Common myeloid progenitor, CD34-positive (primary cell): ENCODE measurements at regions of chr19 and their contacts with region 1.

Region 1: DNA sequence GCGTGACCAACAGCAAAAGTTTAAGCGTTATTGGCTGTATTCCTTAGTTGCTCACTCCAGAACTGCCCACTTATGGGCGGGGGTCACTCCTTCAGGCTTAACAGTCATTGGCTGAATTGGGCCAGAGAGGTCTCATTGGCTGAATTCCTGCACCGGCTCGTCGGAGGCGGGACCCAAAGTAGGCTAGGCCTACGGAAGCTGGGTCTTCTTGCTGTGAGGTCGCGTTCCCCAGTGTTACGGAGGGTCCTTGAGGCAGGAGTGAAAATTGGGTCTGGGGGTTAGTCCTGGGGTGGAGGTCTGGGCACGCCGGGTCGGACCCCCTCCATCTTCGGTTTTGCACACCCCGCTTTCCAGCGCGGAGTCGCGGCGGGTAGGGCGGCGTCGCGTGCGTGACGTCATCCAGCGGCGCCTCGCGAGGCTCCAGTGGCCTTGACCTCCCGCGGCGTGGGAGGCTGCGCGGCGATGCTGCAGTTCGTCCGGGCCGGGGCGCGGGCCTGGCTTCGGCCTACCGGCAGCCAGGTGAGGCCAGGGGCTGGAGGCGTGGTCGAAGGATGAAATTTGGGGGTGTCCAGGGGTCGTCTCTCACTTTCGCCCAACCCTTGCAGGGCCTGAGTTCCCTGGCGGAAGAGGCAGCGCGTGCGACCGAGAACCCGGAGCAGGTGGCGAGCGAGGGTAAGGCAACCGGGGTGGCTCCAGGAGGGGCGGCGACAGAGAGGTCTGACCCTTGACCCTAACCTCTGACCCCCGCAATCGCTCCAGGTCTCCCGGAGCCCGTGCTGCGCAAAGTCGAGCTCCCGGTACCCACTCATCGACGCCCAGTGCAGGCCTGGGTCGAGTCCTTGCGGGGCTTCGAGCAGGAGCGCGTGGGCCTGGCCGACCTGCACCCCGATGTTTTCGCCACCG is at the start of gene MRPL4:
- DNase-seq: peak; percentile 99
- H3K4me3 ChIP-seq: peak within 1 kb of the TSS; percentile 74 to 95 (median 88)
- H3K27ac ChIP-seq: peak within 1 kb of the TSS; percentile 50 to 79
- H3K4me1 ChIP-seq: peaks cover 5 to 19% (median 15%) of the 10 kb centered on the region in 4 experiments
- H3K27me3 ChIP-seq: no peaks in the 10 kb centered on the region

Region 2: GRCh38 chr19:9932835-9933234 is 319.2 kb before region 1 on chr19:
- CTCF ChIA-PET with region 1: interaction called, 12 read pairs
- POLR2A ChIA-PET with region 1: no interaction called
- DNase-seq: no peak
- H3K4me3 ChIP-seq: no peak overlapping the region
- H3K27ac ChIP-seq: no peak overlapping the region
- H3K4me1 ChIP-seq: peaks cover 0 to 16% (median 9%) of the 10 kb centered on the region in 4 experiments
- H3K27me3 ChIP-seq: peaks cover 6 to 50% (median 22%) of the 10 kb centered on the region in 5 experiments

Region 3: DNA sequence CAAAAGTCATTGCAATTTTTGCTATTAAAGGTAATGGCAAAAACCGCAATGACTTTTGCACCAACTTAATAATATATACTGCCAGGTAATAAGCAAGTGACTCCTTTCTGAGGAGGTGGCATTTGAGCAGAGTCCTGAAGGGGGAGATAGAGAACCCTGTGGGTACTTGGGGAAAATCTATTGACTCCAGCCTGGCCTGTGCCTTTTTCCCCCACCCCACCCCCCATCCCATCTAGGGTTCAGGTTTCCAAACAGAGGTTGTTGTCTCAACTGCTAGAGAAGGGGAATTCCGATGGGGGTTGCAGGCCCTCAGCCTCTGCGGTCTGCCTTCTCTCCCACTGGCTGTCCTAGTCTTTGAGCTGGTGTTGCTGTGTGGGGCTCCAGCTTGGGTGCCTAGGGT is 32.4 kb before region 1 on chr19:
- CTCF ChIA-PET with region 1: interaction called, 36 read pairs
- POLR2A ChIA-PET with region 1: no interaction called
- DNase-seq: peak; percentile 53 to 88 (median 86)
- H3K4me3 ChIP-seq: no peak overlapping the region
- H3K27ac ChIP-seq: no peak overlapping the region
- H3K4me1 ChIP-seq: peaks cover 6 to 23% (median 20%) of the 10 kb centered on the region in 4 experiments
- H3K27me3 ChIP-seq: no peaks in the 10 kb centered on the region

Region 4: DNA sequence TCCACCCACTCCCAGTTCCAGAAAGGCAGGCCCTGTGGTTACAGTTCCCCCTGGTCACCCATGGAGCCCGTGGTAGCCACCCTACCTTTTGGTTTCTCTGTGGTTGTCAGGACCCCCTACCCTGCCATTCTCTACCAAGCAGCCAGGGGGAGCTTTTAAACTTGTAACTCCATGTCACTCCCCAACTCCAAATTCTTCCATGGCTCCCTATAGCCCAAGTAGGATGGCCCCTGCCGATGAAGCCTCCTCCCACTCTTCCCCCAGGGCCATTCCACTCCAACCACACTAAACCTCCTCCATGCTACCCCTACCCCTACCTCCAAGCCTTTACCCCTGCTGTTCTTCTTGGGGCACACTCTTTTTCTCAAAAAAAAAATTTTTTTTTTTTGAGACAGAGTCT is 23.1 kb before region 1 on chr19:
- CTCF ChIA-PET with region 1: interaction called, 18 read pairs
- POLR2A ChIA-PET with region 1: interaction called, 4 read pairs
- DNase-seq: peak; percentile 42 to 69 (median 68)
- H3K4me3 ChIP-seq: no peak overlapping the region
- H3K27ac ChIP-seq: no peak overlapping the region
- H3K4me1 ChIP-seq: peaks cover 0 to 29% (median 21%) of the 10 kb centered on the region in 4 experiments
- H3K27me3 ChIP-seq: no peaks in the 10 kb centered on the region

Region 5: DNA sequence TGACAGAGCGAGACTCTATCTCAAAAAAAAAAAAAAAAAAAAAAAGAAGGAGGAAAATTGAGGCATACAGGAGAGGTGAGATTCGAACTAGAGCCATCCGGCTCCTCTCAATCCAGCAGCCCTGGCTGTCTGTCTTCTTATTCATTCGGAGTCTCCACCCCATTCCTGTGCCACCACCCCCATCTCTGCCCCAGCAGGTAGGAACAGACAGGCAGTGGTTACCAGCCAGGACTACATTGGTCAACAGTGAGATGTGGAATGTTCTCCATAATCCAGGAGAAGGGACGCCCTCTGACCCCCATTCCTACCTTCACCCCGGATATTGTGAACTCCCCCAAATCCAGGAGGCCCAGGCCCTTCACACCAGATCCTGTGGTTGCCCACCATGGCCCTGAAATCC is 14.3 kb before region 1 on chr19:
- CTCF ChIA-PET with region 1: interaction called, 13 read pairs
- POLR2A ChIA-PET with region 1: interaction called, 4 read pairs
- DNase-seq: no peak
- H3K4me3 ChIP-seq: no peak overlapping the region
- H3K27ac ChIP-seq: no peak overlapping the region
- H3K4me1 ChIP-seq: peaks cover 0 to 25% (median 19%) of the 10 kb centered on the region in 4 experiments
- H3K27me3 ChIP-seq: no peaks in the 10 kb centered on the region